ENCODE measurements at regions of chr14 and their contacts with region 1.

Region 1: GRCh38 chr14:89276424-89276975 is 140.5 kb downstream of the FOXN3 start:
- DNase-seq: no peak
- ATAC-seq: peak in 1 of 4 donors; percentile 54
- H3K4me3 ChIP-seq: no peak overlapping the region
- H3K27ac ChIP-seq: peak overlapping the region in 1 of 12 donors; percentile 37
- H3K4me1 ChIP-seq: peaks cover 0 to 36% (median 9%) of the 10 kb centered on the region in 12 donors
- H3K27me3 ChIP-seq: no peaks in the 10 kb centered on the region
- CTCF ChIP-seq: no peak
- POLR2A ChIP-seq: no peak

Region 2: DNA sequence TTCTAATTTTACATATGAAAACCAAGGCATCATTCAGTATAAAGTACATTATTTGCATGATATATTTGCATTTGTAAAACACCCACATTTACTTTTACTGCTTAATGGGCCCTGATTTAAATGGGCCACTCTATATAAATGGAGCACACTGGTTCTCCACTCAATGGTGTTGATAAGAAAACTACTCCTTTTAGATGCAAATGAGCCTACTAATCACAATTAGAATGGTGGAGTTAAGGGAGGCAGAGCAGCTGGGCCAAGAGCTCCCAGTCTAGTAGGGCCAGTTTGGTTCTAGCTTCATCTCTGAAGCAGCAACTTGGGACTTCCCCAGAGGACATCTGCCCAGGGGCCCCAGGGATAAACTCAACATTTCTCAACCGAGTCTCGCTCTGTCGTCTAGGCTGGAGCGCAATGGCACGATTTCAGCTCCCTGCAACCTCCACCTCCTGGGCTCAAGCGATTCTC is 19.8 kb after region 1 on chr14:
- intact Hi-C with region 1: loop called in 1 of 10 experiments (anchors 2 kb)
- DNase-seq: no peak
- ATAC-seq: no peak
- H3K4me3 ChIP-seq: no peak overlapping the region
- H3K27ac ChIP-seq: no peak overlapping the region
- H3K4me1 ChIP-seq: peaks cover 0 to 41% (median 21%) of the 10 kb centered on the region in 12 donors
- H3K27me3 ChIP-seq: no peaks in the 10 kb centered on the region
- CTCF ChIP-seq: no peak
- POLR2A ChIP-seq: no peak